Activated CD4-positive, alpha-beta T cell treated with anti-CD3 and anti-CD28 coated beads for 36 hours (primary cell): ENCODE measurements at regions of chr10 and their contacts with region 1.

Region 1: DNA sequence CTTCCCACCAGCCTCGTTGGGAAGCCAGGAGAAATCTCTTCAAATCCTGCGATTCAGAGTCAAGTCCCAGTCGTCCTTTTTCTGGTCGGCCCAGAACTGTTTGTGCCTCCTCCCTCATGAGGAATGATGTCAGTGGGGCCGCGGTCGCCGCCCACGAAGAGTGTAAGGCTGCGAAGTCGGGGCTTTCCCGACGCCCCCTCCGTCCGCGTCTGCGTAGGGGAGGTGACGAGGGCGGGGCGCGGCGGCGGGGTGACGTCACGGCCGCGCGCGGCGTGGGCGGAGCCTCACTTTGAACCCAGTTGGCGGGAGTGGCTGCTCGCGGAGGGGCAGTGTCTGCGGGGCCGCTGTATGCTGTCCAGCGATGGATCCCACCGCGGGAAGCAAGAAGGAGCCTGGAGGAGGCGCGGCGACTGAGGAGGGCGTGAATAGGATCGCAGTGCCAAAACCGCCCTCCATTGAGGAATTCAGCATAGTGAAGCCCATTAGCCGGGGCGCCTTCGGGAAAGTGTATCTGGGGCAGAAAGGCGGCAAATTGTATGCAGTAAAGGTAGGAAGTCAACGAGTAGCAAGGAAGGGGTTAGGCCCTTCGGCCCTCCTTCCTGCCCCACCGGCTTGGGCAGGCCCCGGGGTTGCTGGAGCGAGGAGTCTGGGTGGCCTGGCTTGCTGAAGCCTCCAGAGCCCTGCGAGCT is at the start of gene MASTL:
- DNase-seq: peak; percentile 97
- ATAC-seq: peak; percentile 77
- H3K4me3 Mint-ChIP-seq: peak within 1 kb of the TSS; percentile 94
- H3K27ac Mint-ChIP-seq: peak within 1 kb of the TSS; percentile 99
- H3K4me1 Mint-ChIP-seq: peaks cover 34% of the 10 kb centered on the region
- H3K27me3 Mint-ChIP-seq: no peaks in the 10 kb centered on the region
- total RNA-seq, gene MASTL: 42.1 to 55.3 TPM

Region 2: GRCh38 chr10:26697163-26697921 is 457.9 kb before region 1 on chr10 and contains the start of gene PDSS1:
- CTCF ChIA-PET with region 1: no interaction called
- POLR2A ChIA-PET with region 1: no interaction called
- intact Hi-C with region 1: loop called in 1 of 2 experiments (anchors 1 kb)
- DNase-seq: peak; percentile 79
- ATAC-seq: peak; percentile 78
- H3K4me3 Mint-ChIP-seq: peak within 1 kb of the TSS; percentile 91
- H3K27ac Mint-ChIP-seq: peak within 1 kb of the TSS; percentile 95
- H3K4me1 Mint-ChIP-seq: peaks cover 32% of the 10 kb centered on the region
- H3K27me3 Mint-ChIP-seq: no peaks in the 10 kb centered on the region
- total RNA-seq, gene PDSS1: 16.1 to 20.7 TPM

Region 3: GRCh38 chr10:27099916-27100812 is 55.0 kb before region 1 on chr10 and contains the start of gene ANKRD26:
- CTCF ChIA-PET with region 1: no interaction called
- POLR2A ChIA-PET with region 1: interaction called, 23 read pairs
- intact Hi-C with region 1: loop called (anchors 1 kb)
- DNase-seq: peak; percentile 97
- ATAC-seq: peak; percentile 66
- H3K4me3 Mint-ChIP-seq: peak within 1 kb of the TSS; percentile 84
- H3K27ac Mint-ChIP-seq: peak within 1 kb of the TSS; percentile 93
- H3K4me1 Mint-ChIP-seq: peaks cover 49% of the 10 kb centered on the region
- H3K27me3 Mint-ChIP-seq: no peaks in the 10 kb centered on the region
- total RNA-seq, gene ANKRD26: 10.2 to 13.2 TPM

Region 4: DNA sequence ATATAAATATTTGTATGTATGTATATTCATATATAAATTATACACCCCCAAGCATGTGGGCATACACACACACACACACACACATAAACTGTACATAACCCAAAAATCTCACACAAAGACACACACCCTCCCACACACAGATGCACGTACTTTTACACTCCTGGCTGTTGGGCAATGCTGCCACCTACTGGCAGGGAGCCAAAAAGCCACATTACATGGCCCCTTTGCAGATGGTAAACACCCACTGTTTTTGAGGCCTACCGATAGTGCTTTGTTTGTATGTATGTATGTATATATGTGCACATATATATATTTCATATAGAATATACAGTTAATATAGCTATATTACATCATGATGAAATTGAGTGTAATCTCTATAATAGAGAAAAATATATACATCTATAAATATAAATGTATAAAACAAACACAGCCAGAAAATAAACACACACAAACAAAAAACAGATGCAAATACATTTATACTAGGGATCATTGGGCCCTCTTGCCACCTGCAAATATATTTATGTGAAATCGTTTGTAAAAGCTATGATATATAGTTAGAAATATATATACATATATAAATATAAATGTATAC is 205.5 kb after region 1 on chr10:
- CTCF ChIA-PET with region 1: no interaction called
- POLR2A ChIA-PET with region 1: no interaction called
- intact Hi-C with region 1: loop called in 1 of 2 experiments (anchors 10 kb)
- DNase-seq: peak; percentile 91
- ATAC-seq: peak; percentile 96
- H3K4me3 Mint-ChIP-seq: no peak overlapping the region
- H3K27ac Mint-ChIP-seq: no peak overlapping the region
- H3K4me1 Mint-ChIP-seq: peaks cover 3% of the 10 kb centered on the region
- H3K27me3 Mint-ChIP-seq: no peaks in the 10 kb centered on the region

Region 5: DNA sequence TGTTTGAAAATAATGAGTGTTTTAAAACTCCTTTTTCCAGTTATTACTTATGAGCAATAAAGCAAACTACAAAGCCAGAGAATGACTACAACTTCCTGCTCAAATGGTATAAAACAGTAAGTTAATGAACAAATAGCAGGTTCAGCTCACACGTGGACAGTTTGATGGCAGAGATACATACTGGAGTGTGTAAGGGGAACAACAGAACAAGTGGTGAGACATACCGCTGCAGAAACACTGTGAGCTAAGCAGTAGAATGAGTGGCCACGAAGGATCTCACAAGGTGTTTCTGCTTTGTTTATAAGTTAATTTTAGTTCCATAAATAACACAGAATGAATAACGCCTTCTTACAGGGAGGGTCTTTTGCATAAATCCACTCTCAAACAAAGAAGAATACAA is 593.4 kb after region 1 on chr10:
- CTCF ChIA-PET with region 1: no interaction called
- POLR2A ChIA-PET with region 1: no interaction called
- intact Hi-C with region 1: no loop called
- DNase-seq: no peak
- ATAC-seq: no peak
- H3K4me3 Mint-ChIP-seq: no peak overlapping the region
- H3K27ac Mint-ChIP-seq: no peak overlapping the region
- H3K4me1 Mint-ChIP-seq: peaks cover 25% of the 10 kb centered on the region
- H3K27me3 Mint-ChIP-seq: peaks cover 61% of the 10 kb centered on the region

Region 6: GRCh38 chr10:28302638-28303488 is 1147.7 kb after region 1 on chr10 and contains the start of gene MPP7:
- CTCF ChIA-PET with region 1: no interaction called
- POLR2A ChIA-PET with region 1: interaction called, 3 read pairs
- intact Hi-C with region 1: loop called (anchors 5 to 10 kb)
- DNase-seq: peak; percentile 97
- ATAC-seq: peak; percentile 97
- H3K4me3 Mint-ChIP-seq: peak within 1 kb of the TSS; percentile 90
- H3K27ac Mint-ChIP-seq: peak within 1 kb of the TSS; percentile 80
- H3K4me1 Mint-ChIP-seq: peaks cover 49% of the 10 kb centered on the region
- H3K27me3 Mint-ChIP-seq: no peaks in the 10 kb centered on the region
- total RNA-seq, gene MPP7: 10.9 to 11.0 TPM